ENCODE measurements at regions of chr3 and their contacts with region 1.

Region 1: GRCh38 chr3:182618085-182618732 is 175.1 kb upstream of the ATP11B start:
- DNase-seq: no peak
- ATAC-seq: no peak
- H3K4me3 Mint-ChIP-seq: no peak overlapping the region
- H3K27ac Mint-ChIP-seq: no peak overlapping the region
- H3K4me1 Mint-ChIP-seq: no peaks in the 10 kb centered on the region
- H3K27me3 Mint-ChIP-seq: peaks cover 13% of the 10 kb centered on the region
- CTCF ChIP-seq: no peak

Region 2: GRCh38 chr3:181709537-181710279 is 908.5 kb before region 1 on chr3:
- CTCF ChIA-PET with region 1: no interaction called
- POLR2A ChIA-PET with region 1: no interaction called
- intact Hi-C with region 1: loop called (anchors 5 kb)
- DNase-seq: no peak
- ATAC-seq: no peak
- H3K4me3 Mint-ChIP-seq: peak overlapping the region; percentile 60
- H3K27ac Mint-ChIP-seq: peak overlapping the region; percentile 19
- H3K4me1 Mint-ChIP-seq: peaks cover 12% of the 10 kb centered on the region
- H3K27me3 Mint-ChIP-seq: peaks cover 48% of the 10 kb centered on the region
- CTCF ChIP-seq: peak; percentile 67

Region 3: DNA sequence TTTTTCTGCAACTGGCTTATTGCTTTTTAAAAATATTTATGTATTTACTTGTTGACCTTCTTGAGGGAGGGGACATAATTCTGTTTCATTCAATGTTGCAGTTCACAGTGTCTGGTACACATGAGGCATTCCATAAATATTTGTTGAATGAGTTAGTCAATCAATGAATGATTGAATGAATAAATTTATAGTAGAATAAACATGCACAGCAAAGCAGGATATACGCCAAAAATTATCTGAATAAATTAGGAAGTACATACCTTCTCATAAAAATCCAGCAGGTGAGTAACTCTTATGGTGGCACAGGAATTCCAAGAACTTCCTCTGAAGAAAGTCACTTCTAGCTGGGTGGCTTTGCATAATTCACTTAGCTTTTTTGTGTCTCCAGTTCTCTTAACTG is 294.3 kb before region 1 on chr3:
- CTCF ChIA-PET with region 1: no interaction called
- POLR2A ChIA-PET with region 1: no interaction called
- intact Hi-C with region 1: no loop called
- DNase-seq: no peak
- ATAC-seq: no peak
- H3K4me3 Mint-ChIP-seq: no peak overlapping the region
- H3K27ac Mint-ChIP-seq: no peak overlapping the region
- H3K4me1 Mint-ChIP-seq: no peaks in the 10 kb centered on the region
- H3K27me3 Mint-ChIP-seq: no peaks in the 10 kb centered on the region
- CTCF ChIP-seq: no peak

Region 4: GRCh38 chr3:182954553-182955235 is 336.5 kb after region 1 on chr3:
- CTCF ChIA-PET with region 1: no interaction called
- POLR2A ChIA-PET with region 1: no interaction called
- intact Hi-C with region 1: no loop called
- DNase-seq: no peak
- ATAC-seq: no peak
- H3K4me3 Mint-ChIP-seq: no peak overlapping the region
- H3K27ac Mint-ChIP-seq: no peak overlapping the region
- H3K4me1 Mint-ChIP-seq: peaks cover 3% of the 10 kb centered on the region
- H3K27me3 Mint-ChIP-seq: no peaks in the 10 kb centered on the region
- CTCF ChIP-seq: no peak

Region 5: GRCh38 chr3:183688871-183689270 is 1070.7 kb after region 1 on chr3:
- CTCF ChIA-PET with region 1: no interaction called
- POLR2A ChIA-PET with region 1: no interaction called
- intact Hi-C with region 1: no loop called
- DNase-seq: no peak
- ATAC-seq: no peak
- H3K4me3 Mint-ChIP-seq: no peak overlapping the region
- H3K27ac Mint-ChIP-seq: no peak overlapping the region
- H3K4me1 Mint-ChIP-seq: no peaks in the 10 kb centered on the region
- H3K27me3 Mint-ChIP-seq: no peaks in the 10 kb centered on the region
- CTCF ChIP-seq: no peak